PC-9 (cell line): ENCODE measurements at regions of chrX and their contacts with region 1.

Region 1: GRCh38 chrX:120029354-120029753 is 48.1 kb downstream of the RHOXF2B start:
- DNase-seq: no peak
- H3K4me3 ChIP-seq: no peak overlapping the region
- H3K27ac ChIP-seq: no peak overlapping the region
- H3K4me1 ChIP-seq: no peaks in the 10 kb centered on the region
- H3K27me3 ChIP-seq: no peaks in the 10 kb centered on the region
- CTCF ChIP-seq: no peak

Region 2: GRCh38 chrX:120015145-120016067 is 13.9 kb before region 1 on chrX:
- CTCF ChIA-PET with region 1: no interaction called
- POLR2A ChIA-PET with region 1: no interaction called
- intact Hi-C with region 1: no loop called
- DNase-seq: peak in 1 of 2 experiments; percentile 16
- H3K4me3 ChIP-seq: no peak overlapping the region
- H3K27ac ChIP-seq: no peak overlapping the region
- H3K4me1 ChIP-seq: no peaks in the 10 kb centered on the region
- H3K27me3 ChIP-seq: peaks cover 26% of the 10 kb centered on the region
- CTCF ChIP-seq: no peak

Region 3: GRCh38 chrX:120575379-120576114 is 546.2 kb after region 1 on chrX:
- CTCF ChIA-PET with region 1: no interaction called
- POLR2A ChIA-PET with region 1: interaction called, 26 read pairs
- intact Hi-C with region 1: no loop called
- DNase-seq: no peak
- H3K4me3 ChIP-seq: no peak overlapping the region
- H3K27ac ChIP-seq: no peak overlapping the region
- H3K4me1 ChIP-seq: no peaks in the 10 kb centered on the region
- H3K27me3 ChIP-seq: no peaks in the 10 kb centered on the region
- CTCF ChIP-seq: no peak